ENCODE measurements at regions of chr3 and their contacts with region 1.

Region 1: GRCh38 chr3:141460097-141460704 is 26.6 kb upstream of the RASA2 start:
- DNase-seq: peak; percentile 94
- H3K4me3 Mint-ChIP-seq: no peak overlapping the region
- H3K27ac Mint-ChIP-seq: no peak overlapping the region
- H3K4me1 Mint-ChIP-seq: peaks cover 7% of the 10 kb centered on the region
- H3K27me3 Mint-ChIP-seq: no peaks in the 10 kb centered on the region

Region 2: DNA sequence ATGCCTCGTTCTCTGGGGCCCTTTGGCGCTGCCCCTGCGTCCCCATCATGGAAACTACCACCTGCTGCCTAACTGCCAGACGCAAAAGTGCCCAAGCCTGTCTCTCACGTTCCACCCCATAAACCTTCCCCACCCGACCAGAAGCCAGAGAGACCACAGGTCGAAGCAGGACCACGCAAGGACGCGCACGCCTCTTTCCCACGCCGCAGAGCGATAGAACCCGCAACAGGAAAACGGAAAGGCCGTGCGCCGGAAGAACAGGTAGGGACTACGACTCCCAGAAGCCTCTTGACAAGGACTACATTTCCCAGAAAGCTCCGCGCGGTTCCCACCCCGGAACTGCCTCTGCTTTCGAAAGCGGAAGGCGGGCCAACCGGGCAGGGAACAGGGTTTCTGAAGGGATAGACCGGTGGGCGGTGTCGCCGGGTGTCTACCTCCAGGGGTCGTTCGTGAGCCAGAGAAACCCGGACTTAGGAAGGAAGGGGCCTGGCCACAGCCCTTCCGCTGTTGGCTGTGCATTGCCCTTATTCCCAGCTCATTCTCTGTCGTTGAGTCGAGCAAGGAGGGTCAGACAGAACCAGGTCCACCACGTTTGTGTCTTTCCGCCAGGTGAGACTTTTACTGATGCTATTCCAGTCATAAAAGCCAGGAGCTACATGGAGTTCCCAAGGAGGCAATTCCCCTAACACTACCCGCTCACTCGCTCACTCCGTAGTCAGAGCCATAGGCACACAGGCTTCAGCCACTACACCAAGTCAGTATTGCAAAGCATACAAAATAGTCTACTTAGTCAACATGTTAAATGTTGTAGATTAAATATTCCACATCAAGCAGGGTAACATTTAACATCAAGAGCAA is 148.5 kb before region 1 on chr3:
- CTCF ChIA-PET with region 1: interaction called, 200 read pairs
- POLR2A ChIA-PET with region 1: interaction called, 6 read pairs
- intact Hi-C with region 1: loop called (anchors 1 kb)
- DNase-seq: peak; percentile 100
- H3K4me3 Mint-ChIP-seq: peak overlapping the region; percentile 89
- H3K27ac Mint-ChIP-seq: peak overlapping the region; percentile 90
- H3K4me1 Mint-ChIP-seq: peaks cover 49% of the 10 kb centered on the region
- H3K27me3 Mint-ChIP-seq: no peaks in the 10 kb centered on the region

Region 3: DNA sequence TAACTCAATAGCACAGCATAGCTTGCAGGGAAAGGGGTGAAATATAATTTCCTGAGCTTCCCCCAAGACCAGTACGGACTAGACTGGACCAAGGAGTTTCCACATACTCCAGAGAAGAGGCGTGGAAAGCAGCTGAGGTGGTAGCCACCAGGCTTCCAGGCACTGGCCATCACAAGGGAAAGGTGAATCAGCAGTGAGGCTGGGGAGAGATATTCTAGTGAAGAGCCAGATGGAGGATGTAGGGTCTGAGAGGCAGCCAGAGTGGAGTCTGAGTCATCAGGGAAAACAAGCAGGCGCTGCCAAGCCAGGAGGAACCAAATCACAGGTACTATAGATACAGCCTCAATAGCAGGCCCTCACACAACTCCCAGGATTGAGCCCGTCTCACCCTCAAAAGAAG is 17.0 kb after region 1 on chr3:
- CTCF ChIA-PET with region 1: interaction called, 42 read pairs
- POLR2A ChIA-PET with region 1: no interaction called
- intact Hi-C with region 1: no loop called
- DNase-seq: no peak
- H3K4me3 Mint-ChIP-seq: no peak overlapping the region
- H3K27ac Mint-ChIP-seq: no peak overlapping the region
- H3K4me1 Mint-ChIP-seq: peaks cover 22% of the 10 kb centered on the region
- H3K27me3 Mint-ChIP-seq: no peaks in the 10 kb centered on the region

Region 4: DNA sequence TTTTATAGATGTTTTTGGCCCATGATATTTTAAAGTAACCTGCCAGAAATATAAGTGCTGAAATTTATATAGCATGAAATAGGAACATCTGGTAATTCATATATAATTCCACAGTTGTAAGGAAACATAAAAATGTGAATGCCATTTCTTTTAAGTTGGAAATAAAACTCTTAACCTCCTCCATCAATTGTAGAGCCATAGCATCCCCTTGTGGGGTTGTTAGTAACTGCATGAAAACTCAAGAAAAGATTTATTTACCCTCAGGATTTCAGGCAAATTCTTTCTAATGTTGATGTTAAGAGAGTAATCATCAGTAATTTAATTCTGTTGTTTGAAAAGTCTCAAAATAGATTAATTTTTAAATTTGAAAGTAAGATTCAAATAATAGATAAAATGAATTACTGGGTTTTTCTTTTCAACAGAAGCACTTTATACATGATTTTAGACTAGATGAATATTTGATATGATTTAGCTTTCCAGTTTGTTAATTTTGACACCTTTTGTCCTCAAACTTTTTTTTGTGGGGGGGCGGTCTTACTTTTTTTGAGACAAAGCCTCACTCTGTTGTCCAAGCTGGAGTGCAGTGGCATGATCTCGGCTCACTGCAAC is 101.3 kb after region 1 on chr3:
- CTCF ChIA-PET with region 1: interaction called, 173 read pairs
- POLR2A ChIA-PET with region 1: no interaction called
- intact Hi-C with region 1: loop called (anchors 1 kb)
- DNase-seq: no peak
- H3K4me3 Mint-ChIP-seq: no peak overlapping the region
- H3K27ac Mint-ChIP-seq: peak overlapping the region; percentile 40
- H3K4me1 Mint-ChIP-seq: peaks cover 25% of the 10 kb centered on the region
- H3K27me3 Mint-ChIP-seq: no peaks in the 10 kb centered on the region

Region 5: GRCh38 chr3:141625506-141625905 is 165.3 kb after region 1 on chr3:
- CTCF ChIA-PET with region 1: interaction called, 4 read pairs
- POLR2A ChIA-PET with region 1: no interaction called
- intact Hi-C with region 1: loop called (anchors 5 kb)
- DNase-seq: no peak
- H3K4me3 Mint-ChIP-seq: no peak overlapping the region
- H3K27ac Mint-ChIP-seq: no peak overlapping the region
- H3K4me1 Mint-ChIP-seq: no peaks in the 10 kb centered on the region
- H3K27me3 Mint-ChIP-seq: no peaks in the 10 kb centered on the region

Region 6: GRCh38 chr3:141875374-141875892 is 415.2 kb after region 1 on chr3:
- CTCF ChIA-PET with region 1: interaction called, 3 read pairs
- POLR2A ChIA-PET with region 1: no interaction called
- intact Hi-C with region 1: loop called (anchors 5 kb)
- DNase-seq: peak; percentile 91
- H3K4me3 Mint-ChIP-seq: peak overlapping the region; percentile 88
- H3K27ac Mint-ChIP-seq: peak overlapping the region; percentile 92
- H3K4me1 Mint-ChIP-seq: peaks cover 32% of the 10 kb centered on the region
- H3K27me3 Mint-ChIP-seq: no peaks in the 10 kb centered on the region

Measured in activated CD4-positive, alpha-beta memory T cell treated with anti-CD3 and anti-CD28 coated beads for 36 hours (primary cell).